BJ (cell line): ENCODE measurements at regions of chr1 and their contacts with region 1.

Region 1: GRCh38 chr1:200510228-200510623 is 100.4 kb upstream of the ZNF281 start:
- DNase-seq: peak; percentile 19
- H3K4me3 ChIP-seq: no peak overlapping the region
- H3K27me3 ChIP-seq: peaks cover 3% of the 10 kb centered on the region; the same call in 1 of the 2 replicates
- CTCF ChIP-seq: peak; percentile 77

Region 2: DNA sequence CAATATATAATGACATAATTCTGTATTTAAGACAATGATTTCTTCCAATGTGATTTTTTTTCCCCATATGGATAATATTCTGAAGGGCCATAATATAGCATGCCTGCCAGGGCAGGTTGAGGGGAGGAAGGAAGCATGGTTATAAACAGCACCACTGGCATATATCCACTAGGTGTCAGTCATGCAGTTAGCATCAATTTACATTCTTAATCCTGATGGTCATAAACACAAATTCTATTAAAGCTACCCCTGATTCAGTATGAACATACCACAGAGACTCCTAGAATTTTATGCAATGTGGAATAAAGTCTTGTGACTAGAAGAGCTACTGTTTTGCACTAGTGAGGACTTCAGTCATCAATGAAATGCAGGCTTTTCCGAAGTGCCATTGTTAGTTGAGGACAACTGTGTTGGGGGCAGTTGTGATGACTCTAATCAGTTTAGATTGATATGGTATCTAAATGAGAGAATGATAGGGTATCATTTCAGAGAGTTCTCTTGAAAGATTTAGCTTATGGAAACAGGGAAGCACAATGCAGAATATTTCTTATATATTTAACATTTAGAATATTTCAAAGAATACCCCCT is 825.4 kb before region 1 on chr1:
- CTCF ChIA-PET with region 1: interaction called, 25 read pairs
- POLR2A ChIA-PET with region 1: no interaction called
- DNase-seq: peak; percentile 15
- H3K4me3 ChIP-seq: no peak overlapping the region
- H3K27me3 ChIP-seq: 0 out of 2 replicates have a peak, but pooled peaks cover 1% of the 10 kb centered on the region
- CTCF ChIP-seq: peak; percentile 78

Region 3: GRCh38 chr1:200488375-200489165 is 21.7 kb before region 1 on chr1:
- CTCF ChIA-PET with region 1: interaction called, 13 read pairs
- POLR2A ChIA-PET with region 1: no interaction called
- DNase-seq: no peak
- H3K4me3 ChIP-seq: no peak overlapping the region
- H3K27me3 ChIP-seq: no peaks in the 10 kb centered on the region
- CTCF ChIP-seq: peak; percentile 78

Region 4: GRCh38 chr1:200496937-200497336 is 13.3 kb before region 1 on chr1:
- CTCF ChIA-PET with region 1: interaction called, 11 read pairs
- POLR2A ChIA-PET with region 1: no interaction called
- DNase-seq: no peak
- H3K4me3 ChIP-seq: no peak overlapping the region
- H3K27me3 ChIP-seq: peaks cover 2% of the 10 kb centered on the region
- CTCF ChIP-seq: no peak

Region 5: GRCh38 chr1:200602632-200603031 is 92.4 kb after region 1 on chr1:
- CTCF ChIA-PET with region 1: no interaction called
- POLR2A ChIA-PET with region 1: no interaction called
- DNase-seq: no peak
- H3K4me3 ChIP-seq: no peak overlapping the region
- H3K27me3 ChIP-seq: no peaks in the 10 kb centered on the region
- CTCF ChIP-seq: no peak

Region 6: DNA sequence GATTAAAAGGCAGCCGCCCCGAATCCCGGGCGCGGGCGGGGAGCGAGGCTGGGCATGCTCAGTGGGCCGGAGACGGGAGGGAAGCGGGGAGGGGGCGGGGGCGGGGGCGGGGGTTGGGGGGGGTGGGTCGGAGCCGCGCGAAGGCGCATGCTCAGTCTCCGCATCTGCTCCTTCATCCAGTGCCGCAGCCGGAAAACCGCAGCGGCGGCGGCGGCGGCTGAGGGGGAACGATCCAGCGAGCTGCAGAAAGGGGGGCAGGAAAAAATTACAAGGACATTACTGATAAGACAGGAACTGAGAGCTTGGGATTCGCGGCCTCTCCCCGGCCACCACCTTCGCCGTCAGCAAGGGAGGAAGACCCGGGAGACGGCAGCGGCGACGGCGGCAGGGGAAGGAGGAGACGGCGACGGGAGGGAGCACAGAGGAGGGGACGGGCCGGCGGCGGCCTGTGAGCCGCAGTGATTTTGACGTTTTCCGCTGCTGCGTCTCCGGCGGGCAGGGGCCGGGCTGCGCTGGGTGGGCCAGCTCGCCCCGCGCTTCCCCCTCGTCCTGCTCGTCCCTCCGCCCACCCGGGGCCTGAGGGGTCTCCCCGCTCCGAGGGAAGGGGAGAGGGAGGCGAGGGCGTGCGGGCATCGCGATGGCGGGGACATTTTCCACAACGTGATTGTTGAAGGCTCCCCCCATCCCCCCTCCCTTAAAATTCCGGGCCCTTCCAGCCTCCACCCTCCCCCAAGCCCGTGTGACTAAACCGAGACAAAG is 228.7 kb after region 1 on chr1 and contains the start of gene CAMSAP2:
- CTCF ChIA-PET with region 1: no interaction called
- POLR2A ChIA-PET with region 1: no interaction called
- DNase-seq: peak; percentile 35
- H3K4me3 ChIP-seq: peak within 1 kb of the TSS; percentile 84
- H3K27me3 ChIP-seq: no peaks in the 10 kb centered on the region
- CTCF ChIP-seq: no peak
- polyA plus RNA-seq, gene CAMSAP2: 7.5 and 16.4 TPM in 2 replicates